ENCODE measurements at regions of chr18 and their contacts with region 1.

Region 1: GRCh38 chr18:864872-865273 is 39.8 kb upstream of the ADCYAP1 start:
- DNase-seq: peak; percentile 65
- H3K4me3 Mint-ChIP-seq: no peak overlapping the region
- H3K27ac Mint-ChIP-seq: no peak overlapping the region
- H3K4me1 Mint-ChIP-seq: peaks cover 2% of the 10 kb centered on the region
- H3K27me3 Mint-ChIP-seq: peaks cover 34% of the 10 kb centered on the region

Region 2: DNA sequence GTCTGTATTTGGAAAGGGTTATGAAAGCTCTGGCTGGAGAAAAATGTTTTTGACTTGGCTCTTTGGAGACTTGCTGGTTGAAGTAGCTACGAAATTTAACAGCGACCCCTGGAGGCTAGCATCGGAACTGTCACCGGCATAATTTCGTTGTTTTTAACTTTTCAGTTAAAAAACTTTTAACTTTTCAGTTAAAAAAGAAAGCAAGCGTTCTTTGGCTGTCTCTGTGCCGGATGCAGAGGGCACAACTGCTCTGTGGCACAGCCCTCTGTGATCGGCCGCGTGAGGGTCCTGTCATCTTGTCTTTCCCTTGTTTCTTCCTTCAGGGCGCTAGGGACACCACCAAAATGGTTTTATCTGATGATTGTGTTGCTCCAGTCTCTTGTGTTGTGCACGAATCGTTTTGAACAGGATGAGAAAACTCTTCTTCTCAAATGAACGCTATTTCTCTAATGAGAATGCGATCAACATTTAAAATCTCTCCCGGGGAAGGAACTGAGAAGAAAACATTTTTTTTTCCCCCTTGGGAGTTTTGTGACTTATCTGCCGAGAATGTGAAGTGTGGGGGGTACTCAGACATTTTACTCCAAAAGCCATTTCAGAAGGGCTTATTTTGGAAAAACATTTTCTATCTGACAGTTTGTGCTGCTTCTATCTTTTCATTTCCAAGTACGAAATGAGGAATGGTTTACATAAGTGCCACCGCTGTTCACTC is 96.9 kb after region 1 on chr18:
- CTCF ChIA-PET with region 1: interaction called, 16 read pairs
- POLR2A ChIA-PET with region 1: no interaction called
- DNase-seq: peak; percentile 45
- H3K4me3 Mint-ChIP-seq: no peak overlapping the region
- H3K27ac Mint-ChIP-seq: no peak overlapping the region
- H3K4me1 Mint-ChIP-seq: no peaks in the 10 kb centered on the region
- H3K27me3 Mint-ChIP-seq: peaks cover 19% of the 10 kb centered on the region

Measured in activated CD4-positive, alpha-beta memory T cell treated with anti-CD3 and anti-CD28 coated beads, Interleukin-2, amount 10 ng/mL, durations not matched to agents 7 days and 5 days (primary cell).